Activated CD4-positive, alpha-beta memory T cell treated with anti-CD3 and anti-CD28 coated beads, Interleukin-2, amount 10 ng/mL, durations not matched to agents 7 days and 5 days (primary cell): ENCODE measurements at regions of chr6 and their contacts with region 1.

Region 1: DNA sequence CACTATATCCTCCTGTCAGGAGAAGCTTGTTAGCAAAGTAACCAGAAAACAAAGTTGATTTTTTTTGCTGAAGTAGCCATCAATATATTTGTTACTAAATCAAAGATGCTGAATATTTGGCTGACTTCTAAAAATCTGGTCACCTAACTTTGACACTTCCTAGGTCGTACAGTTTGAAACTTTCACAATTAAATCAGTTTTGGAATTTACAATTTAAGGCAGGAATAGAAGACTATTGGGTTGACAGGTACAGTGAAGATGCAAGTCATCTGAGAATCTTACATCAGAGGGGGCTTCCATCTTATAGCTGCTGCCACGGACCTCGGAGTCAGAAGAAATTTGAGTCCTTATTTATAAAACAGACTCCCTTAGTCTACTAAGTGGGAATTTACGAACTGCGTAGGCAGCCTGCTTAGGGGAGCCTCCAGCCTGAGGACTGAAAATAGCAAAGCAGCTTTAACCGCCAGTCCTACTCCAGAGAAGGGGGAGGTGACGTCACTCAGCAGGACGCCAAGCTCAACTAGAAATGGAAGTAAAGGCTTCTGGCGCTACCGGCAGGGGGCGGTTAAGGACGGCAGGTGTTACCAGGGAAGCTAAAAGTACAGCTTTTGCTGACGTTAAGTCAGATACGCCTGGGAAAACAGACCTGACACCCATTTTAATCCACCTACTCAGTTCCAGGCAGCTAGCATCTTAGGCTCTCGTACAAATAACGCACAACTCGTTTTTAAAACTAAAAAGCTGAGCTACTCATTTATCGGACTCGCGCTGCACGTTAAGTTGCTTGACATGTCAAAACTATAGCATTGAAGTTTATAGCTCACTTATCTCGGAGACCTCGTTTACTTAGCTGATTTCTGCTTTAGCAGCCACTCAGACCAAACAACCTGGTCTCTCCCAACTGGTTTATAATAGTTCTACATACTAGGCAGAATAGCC is 61.1 kb upstream of the HFE start:
- DNase-seq: peak; percentile 94
- H3K4me3 Mint-ChIP-seq: peak overlapping the region; percentile 75
- H3K27ac Mint-ChIP-seq: peak overlapping the region; percentile 100
- H3K4me1 Mint-ChIP-seq: peaks cover 84% of the 10 kb centered on the region
- H3K27me3 Mint-ChIP-seq: peaks cover 2% of the 10 kb centered on the region

Region 2: DNA sequence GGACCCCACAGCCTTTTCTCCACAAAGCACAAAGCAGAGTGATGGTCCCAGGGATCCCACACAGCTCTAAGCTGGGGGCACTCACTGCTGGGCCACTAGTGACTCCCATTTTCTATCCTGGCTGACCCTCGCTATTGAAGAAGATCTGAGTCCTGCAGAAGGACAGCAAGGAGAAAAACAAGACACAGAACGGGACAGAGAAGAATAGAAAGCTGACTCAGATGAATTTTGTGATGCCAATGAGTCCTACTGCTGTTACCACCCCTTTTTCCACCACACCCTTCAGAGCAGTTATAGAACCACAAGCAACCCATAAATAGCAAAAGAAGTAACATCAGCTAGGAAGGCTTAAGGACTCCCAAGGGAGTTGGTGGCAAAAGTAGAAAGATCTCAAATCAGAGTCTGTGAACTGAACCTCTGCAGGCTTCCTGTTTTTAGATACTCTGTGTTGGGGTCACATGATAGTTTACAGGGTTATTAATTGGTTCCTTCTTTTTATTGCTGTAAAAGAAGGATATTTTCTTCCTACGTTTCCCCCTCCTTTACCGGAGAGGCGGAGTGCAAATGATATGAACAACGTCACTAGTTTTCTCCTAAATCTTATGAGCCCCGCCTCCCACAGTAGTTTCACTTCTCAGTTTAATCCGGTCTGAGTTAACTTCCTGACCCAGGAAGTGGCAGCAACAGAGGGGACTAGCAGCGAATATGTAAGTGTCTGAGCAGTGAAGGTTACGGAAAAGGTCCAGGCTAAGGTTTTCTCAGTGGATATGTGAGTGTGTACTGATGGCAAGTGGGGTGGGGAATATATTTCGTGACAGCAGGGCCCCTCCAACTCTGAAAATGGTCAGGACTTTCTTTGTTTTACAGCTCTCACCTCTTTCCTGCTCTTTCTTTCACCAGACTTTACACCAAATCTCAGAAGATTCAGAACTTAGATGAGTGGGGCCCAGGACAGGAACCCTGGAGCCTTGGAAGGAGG is 63.7 kb before region 1 on chr6 and contains the start of gene TRIM38:
- CTCF ChIA-PET with region 1: interaction called, 6 read pairs
- POLR2A ChIA-PET with region 1: interaction called, 78 read pairs
- DNase-seq: peak; percentile 84
- H3K4me3 Mint-ChIP-seq: peak within 1 kb of the TSS; percentile 96
- H3K27ac Mint-ChIP-seq: peak within 1 kb of the TSS; percentile 96
- H3K4me1 Mint-ChIP-seq: peaks cover 80% of the 10 kb centered on the region
- H3K27me3 Mint-ChIP-seq: no peaks in the 10 kb centered on the region
- total RNA-seq, gene TRIM38: 32.6 to 33.5 TPM

Region 3: DNA sequence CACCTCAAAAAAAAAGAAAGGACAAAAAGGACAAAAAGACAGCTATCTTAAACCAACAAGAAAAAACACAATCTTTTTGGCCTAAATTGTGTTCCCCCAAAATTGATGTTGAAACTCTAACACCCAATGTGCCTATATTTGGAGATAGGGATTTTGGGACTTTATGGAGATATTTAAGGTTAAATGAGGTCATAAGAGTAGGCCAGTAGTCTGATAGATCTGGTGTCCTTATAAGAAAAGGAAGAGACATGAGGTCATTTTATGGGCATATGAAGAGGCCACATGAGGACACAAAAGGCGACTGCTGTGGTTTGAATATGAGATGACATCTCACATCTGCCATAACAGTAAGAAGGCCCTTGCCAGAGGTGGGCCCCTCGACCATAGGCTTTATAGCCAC is 14.1 kb before region 1 on chr6:
- CTCF ChIA-PET with region 1: interaction called, 100 read pairs
- POLR2A ChIA-PET with region 1: interaction called, 594 read pairs
- DNase-seq: no peak
- H3K4me3 Mint-ChIP-seq: no peak overlapping the region
- H3K27ac Mint-ChIP-seq: no peak overlapping the region
- H3K4me1 Mint-ChIP-seq: peaks cover 10% of the 10 kb centered on the region
- H3K27me3 Mint-ChIP-seq: no peaks in the 10 kb centered on the region

Region 4: DNA sequence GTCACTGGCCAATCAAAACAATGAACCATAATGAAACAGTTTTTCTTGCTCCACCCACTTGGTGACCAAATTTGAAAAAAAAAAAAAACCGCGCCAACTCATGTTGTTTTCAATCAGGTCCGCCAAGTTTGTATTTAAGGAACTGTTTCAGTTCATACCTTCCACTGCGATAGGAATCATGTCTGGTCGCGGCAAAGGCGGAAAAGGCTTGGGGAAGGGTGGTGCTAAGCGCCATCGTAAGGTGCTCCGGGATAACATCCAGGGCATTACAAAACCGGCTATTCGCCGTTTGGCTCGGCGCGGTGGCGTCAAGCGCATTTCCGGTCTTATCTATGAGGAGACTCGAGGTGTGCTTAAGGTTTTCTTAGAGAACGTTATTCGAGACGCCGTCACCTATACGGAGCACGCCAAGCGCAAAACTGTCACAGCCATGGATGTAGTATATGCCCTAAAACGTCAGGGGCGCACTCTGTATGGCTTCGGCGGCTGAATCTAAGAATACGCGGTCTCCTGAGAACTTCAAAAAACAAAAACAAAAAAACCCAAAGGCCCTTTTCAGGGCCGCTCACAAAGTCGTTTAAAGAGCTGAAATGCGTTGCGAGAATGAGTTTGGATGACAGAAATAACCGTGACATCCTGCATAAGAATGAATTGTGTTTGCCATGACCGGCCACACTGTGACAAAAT is 77.8 kb after region 1 on chr6:
- CTCF ChIA-PET with region 1: interaction called, 5 read pairs
- POLR2A ChIA-PET with region 1: interaction called, 37 read pairs
- DNase-seq: peak; percentile 93
- H3K4me3 Mint-ChIP-seq: peak overlapping the region; percentile 80
- H3K27ac Mint-ChIP-seq: peak overlapping the region; percentile 99
- H3K4me1 Mint-ChIP-seq: peaks cover 23% of the 10 kb centered on the region
- H3K27me3 Mint-ChIP-seq: no peaks in the 10 kb centered on the region

Region 5: GRCh38 chr6:26136321-26136720 is 110.2 kb after region 1 on chr6:
- CTCF ChIA-PET with region 1: no interaction called
- POLR2A ChIA-PET with region 1: no interaction called
- DNase-seq: no peak
- H3K4me3 Mint-ChIP-seq: no peak overlapping the region
- H3K27ac Mint-ChIP-seq: no peak overlapping the region
- H3K4me1 Mint-ChIP-seq: peaks cover 21% of the 10 kb centered on the region
- H3K27me3 Mint-ChIP-seq: no peaks in the 10 kb centered on the region

Region 6: DNA sequence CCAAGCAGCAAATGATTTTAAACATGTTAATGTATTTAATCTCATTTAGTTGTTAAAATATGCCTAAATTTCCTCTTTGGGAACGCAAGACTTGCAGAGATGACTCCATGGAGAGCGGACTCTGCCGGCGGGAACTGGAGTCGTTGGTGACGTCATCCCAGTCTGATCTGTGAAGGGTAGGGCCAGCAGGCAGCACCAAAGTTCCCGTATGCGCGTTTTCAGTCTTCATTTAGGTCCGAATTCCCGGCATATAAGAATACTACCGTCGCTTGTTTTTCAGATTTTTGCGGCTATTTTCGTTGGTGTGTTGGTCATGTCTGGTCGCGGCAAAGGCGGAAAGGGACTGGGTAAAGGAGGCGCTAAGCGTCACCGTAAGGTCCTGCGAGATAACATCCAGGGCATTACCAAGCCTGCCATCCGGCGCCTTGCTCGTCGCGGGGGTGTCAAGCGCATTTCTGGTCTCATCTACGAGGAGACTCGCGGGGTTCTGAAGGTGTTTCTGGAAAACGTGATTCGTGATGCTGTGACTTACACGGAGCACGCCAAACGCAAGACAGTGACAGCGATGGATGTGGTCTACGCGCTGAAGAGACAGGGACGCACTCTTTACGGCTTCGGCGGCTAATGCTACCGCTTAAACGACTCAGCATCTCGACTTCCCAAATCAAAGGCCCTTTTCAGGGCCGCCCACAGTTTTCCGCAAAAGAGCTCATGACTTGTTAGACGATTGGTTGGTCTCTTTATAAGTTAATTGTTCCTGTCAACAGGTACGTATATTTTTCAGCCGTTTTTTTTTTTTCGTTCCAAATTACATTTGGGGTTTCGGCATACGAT is 178.4 kb after region 1 on chr6:
- CTCF ChIA-PET with region 1: interaction called, 4 read pairs
- POLR2A ChIA-PET with region 1: interaction called, 295 read pairs
- DNase-seq: peak; percentile 90
- H3K4me3 Mint-ChIP-seq: no peak overlapping the region
- H3K27ac Mint-ChIP-seq: no peak overlapping the region
- H3K4me1 Mint-ChIP-seq: peaks cover 35% of the 10 kb centered on the region
- H3K27me3 Mint-ChIP-seq: no peaks in the 10 kb centered on the region

Region 7: GRCh38 chr6:26249957-26250697 is 224.0 kb after region 1 on chr6:
- CTCF ChIA-PET with region 1: interaction called, 3 read pairs
- POLR2A ChIA-PET with region 1: interaction called, 42 read pairs
- DNase-seq: peak; percentile 84
- H3K4me3 Mint-ChIP-seq: peak overlapping the region; percentile 90
- H3K27ac Mint-ChIP-seq: peak overlapping the region; percentile 93
- H3K4me1 Mint-ChIP-seq: peaks cover 42% of the 10 kb centered on the region
- H3K27me3 Mint-ChIP-seq: no peaks in the 10 kb centered on the region

Region 8: GRCh38 chr6:27825025-27825793 is 1799.0 kb after region 1 on chr6:
- CTCF ChIA-PET with region 1: interaction called, 4 read pairs
- POLR2A ChIA-PET with region 1: interaction called, 14 read pairs
- DNase-seq: no peak
- H3K4me3 Mint-ChIP-seq: peak overlapping the region; percentile 82
- H3K27ac Mint-ChIP-seq: peak overlapping the region; percentile 99
- H3K4me1 Mint-ChIP-seq: peaks cover 51% of the 10 kb centered on the region
- H3K27me3 Mint-ChIP-seq: no peaks in the 10 kb centered on the region